ENCODE measurements at regions of chr1 and their contacts with region 1.

Region 1: DNA sequence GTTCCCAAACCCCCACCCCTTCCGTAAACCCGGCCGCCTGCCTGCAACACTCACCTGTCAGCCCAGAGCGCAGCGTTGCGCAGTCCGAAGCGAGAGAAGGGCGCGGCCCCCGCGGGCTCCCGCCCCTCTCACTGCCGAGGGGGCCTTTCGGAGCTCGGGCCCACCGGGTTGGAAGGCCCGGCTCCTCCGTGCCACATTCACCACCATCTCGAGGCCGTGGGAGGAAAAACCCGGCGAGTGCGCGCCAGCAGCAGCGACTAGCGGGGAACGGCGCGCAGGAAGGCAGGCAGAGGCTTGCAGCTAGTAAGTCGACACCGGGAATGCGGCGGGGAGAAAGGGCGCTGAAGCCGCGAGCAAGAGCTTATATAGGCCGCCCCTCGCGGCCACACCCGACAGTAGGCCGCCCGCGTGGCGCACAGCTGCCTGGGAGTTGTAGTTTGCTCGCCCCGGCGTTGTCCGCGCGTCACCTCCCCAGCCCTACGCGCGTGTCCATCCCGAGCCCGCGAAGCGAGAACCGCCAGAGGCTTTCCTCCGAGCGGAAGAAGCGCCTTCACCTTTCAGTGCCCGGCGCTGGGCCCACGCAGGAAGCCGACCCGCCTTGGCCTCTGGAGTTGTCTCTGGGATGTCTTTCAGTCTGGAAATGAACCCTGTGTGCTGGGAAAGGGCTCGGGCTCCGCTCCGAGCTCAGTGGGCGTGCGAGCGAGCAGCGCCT is 10.4 kb upstream of the RAB42 start:
- DNase-seq: peak; percentile 96
- H3K4me3 ChIP-seq: peak overlapping the region; percentile 75 to 83
- H3K27ac ChIP-seq: peak overlapping the region; percentile 84
- H3K4me1 ChIP-seq: peaks cover 3% of the 10 kb centered on the region
- H3K27me3 ChIP-seq: no peaks in the 10 kb centered on the region
- CTCF ChIP-seq: peak in 2 of 4 experiments; percentile 54 to 63
- POLR2A ChIP-seq: peak; percentile 85

Region 2: DNA sequence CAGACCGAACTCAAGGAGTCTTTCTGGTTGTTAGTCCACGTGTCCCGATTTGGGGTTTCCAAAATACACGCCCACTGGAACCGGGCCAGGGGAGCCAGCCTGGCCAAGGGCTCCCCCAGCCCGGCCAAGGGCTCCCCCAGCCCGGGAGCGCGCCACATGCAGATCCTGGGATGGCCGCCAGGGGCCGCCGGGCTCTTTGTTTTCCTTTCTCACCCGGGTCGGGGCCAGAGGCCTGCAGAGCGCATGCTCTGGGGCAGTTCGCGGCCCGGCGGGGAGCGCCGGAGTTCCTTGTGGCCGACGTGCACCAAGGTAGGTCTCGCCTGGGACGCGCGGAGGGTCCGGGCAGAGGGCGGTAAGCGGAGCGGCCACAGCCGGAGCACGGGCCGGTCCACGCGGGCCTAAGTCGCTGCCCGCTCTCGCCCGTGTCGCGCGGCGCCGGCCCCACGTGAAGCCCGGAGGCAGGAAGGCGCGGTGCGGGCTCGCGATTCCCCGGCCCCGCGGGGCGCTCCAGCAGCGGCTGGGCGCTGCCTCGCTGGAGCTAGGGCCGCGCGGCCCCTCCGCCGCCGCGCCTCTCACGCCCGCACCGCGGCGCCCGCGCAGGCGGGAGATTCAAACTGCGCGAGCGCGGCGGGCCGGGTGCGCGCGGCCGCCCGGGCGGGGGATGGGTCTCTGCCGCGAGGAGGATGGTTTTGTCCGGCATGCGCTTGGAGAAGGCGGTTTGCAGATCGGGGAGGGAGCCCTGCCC is 63.5 kb before region 1 on chr1:
- intact Hi-C with region 1: loop called (anchors 5 kb)
- DNase-seq: peak; percentile 88
- H3K4me3 ChIP-seq: peak overlapping the region; percentile 59 to 65
- H3K27ac ChIP-seq: peak overlapping the region; percentile 72 to 83
- H3K4me1 ChIP-seq: no peaks in the 10 kb centered on the region
- H3K27me3 ChIP-seq: no peaks in the 10 kb centered on the region
- CTCF ChIP-seq: peak; percentile 97 to 99 (median 98)
- POLR2A ChIP-seq: peak; percentile 67

Region 3: DNA sequence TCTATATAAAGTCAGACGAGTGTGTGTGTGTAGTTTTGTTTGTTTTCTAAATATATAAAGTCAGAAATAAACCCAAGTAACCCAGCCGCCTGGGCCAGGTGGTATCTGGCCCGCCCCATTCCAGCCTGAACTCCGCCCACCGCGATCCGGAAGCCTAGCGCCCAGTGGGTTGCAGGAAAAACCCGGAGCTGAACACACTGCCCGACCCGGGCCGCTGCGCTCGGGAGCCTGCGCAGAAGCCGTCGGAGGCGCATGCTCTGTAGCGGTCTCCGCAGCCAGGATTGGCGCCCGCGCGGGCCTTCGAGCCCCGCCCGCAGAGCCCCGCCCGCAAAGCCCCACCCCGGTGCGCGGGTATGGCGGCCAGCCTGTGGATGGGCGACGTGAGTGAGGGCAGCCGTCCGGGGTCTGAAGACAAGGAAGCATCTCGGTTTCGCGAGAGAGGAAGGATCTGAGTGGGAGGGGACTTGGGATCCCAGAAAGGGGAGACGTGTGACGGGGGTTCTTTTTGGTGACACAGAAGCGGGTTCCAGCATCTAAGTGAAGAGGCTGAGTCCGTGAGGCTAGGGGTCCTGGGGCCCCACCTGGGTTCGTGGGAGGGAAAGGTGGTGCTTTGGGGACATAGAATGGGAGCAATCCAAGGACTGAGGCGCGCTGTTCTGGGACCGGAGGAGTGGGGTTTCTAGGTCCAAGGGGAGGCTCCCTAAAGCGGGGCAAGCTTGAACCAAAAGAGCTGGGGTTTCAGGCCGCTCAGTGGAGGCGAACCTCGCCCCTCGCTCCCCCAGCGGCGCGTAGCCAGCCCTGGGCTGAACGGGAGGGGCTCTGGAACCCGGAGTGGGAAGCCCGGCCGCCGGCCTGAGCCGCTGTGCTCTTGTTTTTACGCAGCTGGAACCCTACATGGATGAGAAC is 28.7 kb before region 1 on chr1 and contains the start of gene TRNAU1AP:
- intact Hi-C with region 1: loop called (anchors 2 kb)
- DNase-seq: peak; percentile 94
- H3K4me3 ChIP-seq: peak within 1 kb of the TSS; percentile 64 to 89
- H3K27ac ChIP-seq: peak within 1 kb of the TSS; percentile 83 to 84
- H3K4me1 ChIP-seq: no peaks in the 10 kb centered on the region
- H3K27me3 ChIP-seq: no peaks in the 10 kb centered on the region
- CTCF ChIP-seq: peak in 2 of 4 experiments; percentile 17 to 27
- POLR2A ChIP-seq: peak; percentile 88
- total RNA-seq, gene TRNAU1AP: 11.5 to 20.8 TPM

Region 4: GRCh38 chr1:28565040-28565439 is 16.7 kb before region 1 on chr1:
- intact Hi-C with region 1: no loop called
- DNase-seq: no peak
- H3K4me3 ChIP-seq: no peak overlapping the region
- H3K27ac ChIP-seq: no peak overlapping the region
- H3K4me1 ChIP-seq: no peaks in the 10 kb centered on the region
- H3K27me3 ChIP-seq: no peaks in the 10 kb centered on the region
- CTCF ChIP-seq: no peak
- POLR2A ChIP-seq: no peak

Region 5: DNA sequence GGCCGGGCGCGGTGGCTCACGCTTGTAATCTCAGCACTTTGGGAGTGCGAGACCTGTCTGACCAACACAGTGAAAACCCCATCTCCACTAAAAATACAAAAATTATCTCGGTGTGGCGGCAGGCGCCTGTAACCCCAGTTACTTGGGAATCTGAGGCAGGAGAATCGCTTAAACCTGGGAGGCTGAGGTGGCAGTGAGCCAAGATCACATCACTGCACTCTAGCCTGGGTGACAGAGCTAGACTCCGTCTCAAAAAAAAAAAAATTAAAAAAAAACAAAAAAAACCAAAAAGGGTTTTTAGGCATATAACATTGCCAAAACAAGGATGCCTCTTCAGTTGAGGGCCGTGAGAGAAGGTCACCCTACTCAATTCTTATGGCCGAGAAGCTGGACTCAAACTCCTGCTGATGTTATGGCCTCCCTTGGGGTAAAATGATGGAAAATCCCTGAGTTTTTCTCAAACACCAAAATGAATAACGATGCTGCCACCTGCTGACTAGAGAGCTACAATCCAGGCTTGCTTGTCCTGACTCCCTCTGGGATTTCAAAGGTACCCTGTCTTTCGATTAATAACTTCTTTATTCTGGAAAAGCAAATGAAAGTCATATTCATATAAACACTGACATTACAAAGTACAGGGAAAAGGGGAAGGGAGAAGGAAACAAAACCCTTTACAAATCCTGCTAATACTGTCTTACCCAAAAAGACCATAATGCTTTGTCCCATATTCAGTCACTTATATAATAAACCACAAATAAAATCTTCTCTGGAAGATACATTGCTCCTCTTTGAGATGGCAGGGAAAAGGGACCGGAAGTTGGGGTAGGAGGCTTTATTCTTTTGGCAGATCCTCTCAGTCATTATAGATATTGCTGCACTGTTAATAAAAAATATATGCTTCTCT is 21.1 kb after region 1 on chr1:
- intact Hi-C with region 1: no loop called
- DNase-seq: peak; percentile 51
- H3K4me3 ChIP-seq: no peak overlapping the region
- H3K27ac ChIP-seq: no peak overlapping the region
- H3K4me1 ChIP-seq: no peaks in the 10 kb centered on the region
- H3K27me3 ChIP-seq: no peaks in the 10 kb centered on the region
- CTCF ChIP-seq: peak in 3 of 4 experiments; percentile 59 to 77 (median 69)
- POLR2A ChIP-seq: no peak

Region 6: DNA sequence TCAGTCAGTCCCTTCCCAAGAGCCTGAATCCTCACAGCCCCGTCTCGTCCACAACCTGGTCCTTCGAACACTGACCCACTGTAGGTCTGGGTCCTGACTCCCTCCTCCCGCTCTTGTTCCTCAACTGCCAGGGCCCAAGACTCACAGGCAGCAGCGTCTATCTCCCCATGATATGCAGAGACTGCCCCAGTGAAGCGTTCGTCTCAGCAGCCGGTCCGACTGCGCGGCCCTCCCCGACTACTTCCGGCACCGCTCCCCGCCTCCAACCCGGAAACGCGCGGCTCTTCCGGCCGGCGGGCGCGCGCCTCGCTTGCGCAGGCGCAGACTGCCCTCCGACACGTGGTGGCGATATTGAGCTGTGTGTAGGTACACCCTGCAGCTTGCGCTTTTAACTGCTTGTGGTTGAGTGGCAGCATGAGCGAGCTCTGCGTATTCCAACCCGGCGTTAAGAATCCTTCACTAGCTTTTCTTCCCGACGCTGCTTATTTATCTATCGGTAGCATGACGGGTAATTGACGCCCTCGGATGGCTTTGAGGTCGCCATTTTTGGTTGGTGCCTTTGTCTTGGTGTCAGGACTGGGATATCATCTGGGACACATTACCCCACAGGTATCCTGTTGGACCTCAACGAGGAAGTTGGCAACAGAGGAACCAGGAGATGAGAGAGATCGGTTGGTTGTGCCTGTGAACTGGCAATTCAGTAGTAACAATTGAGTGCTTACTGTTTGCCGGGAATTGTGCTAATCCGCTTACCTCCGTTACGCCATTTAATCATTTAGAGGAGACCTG is 61.3 kb after region 1 on chr1 and contains the start of gene TAF12:
- intact Hi-C with region 1: loop called (anchors 10 kb)
- DNase-seq: peak; percentile 91
- H3K4me3 ChIP-seq: peak within 1 kb of the TSS; percentile 55 to 67
- H3K27ac ChIP-seq: peak within 1 kb of the TSS; percentile 81 to 83
- H3K4me1 ChIP-seq: no peaks in the 10 kb centered on the region
- H3K27me3 ChIP-seq: no peaks in the 10 kb centered on the region
- CTCF ChIP-seq: peak; percentile 24 to 67 (median 62)
- POLR2A ChIP-seq: peak; percentile 97
- total RNA-seq, gene TAF12: 11.7 to 16.1 TPM

Region 7: DNA sequence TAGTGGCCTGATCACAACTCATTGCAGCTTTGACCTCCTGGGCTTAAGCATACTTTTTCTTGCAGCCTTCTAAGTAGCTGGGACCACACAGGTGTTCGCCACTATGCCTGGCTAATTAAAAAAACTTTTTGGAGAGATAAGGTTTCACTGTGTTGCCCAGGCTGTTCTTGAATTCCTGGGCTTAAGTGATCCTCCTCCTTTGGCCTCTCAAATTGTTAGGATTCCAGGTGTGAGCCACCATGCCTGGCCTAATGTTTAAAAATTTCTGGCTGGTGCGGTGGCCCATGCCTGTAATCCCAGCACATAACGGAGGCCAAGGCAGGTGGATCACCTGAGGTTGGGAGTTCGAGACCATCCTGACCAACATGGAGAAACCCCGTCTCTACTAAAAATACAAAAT is 179.5 kb after region 1 on chr1:
- intact Hi-C with region 1: no loop called
- DNase-seq: no peak
- H3K4me3 ChIP-seq: no peak overlapping the region
- H3K27ac ChIP-seq: no peak overlapping the region
- H3K4me1 ChIP-seq: no peaks in the 10 kb centered on the region
- H3K27me3 ChIP-seq: no peaks in the 10 kb centered on the region
- CTCF ChIP-seq: no peak
- POLR2A ChIP-seq: no peak